Endothelial cell of umbilical vein (primary cell): ENCODE measurements at regions of chr15 and their contacts with region 1.

Region 1: DNA sequence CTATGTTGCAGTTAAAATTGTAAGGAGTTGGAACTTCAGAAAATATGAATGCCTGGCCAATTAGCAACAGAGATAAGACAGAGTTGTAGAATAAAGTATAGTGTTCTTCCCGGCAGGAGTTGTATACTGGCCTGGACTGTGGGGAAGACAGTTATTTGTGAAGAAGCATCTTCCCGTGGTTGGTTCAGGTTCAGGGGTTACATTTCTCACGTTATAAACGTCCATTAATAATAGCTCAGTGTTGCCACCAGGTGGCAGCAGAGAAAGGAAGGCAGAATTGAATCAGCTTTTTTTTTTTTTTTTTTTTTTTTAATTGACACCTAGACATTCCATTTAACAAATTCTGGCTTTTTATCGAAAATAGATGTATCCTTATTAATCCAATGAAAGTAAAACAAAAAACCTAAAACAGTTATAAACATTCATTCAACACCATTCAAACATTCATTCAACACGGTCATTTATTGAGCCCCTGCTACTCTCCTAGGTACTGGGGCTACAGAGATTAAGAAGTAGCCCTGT is 66.4 kb upstream of the NR2E3 start:
- DNase-seq: peak; percentile 53
- H3K4me3 ChIP-seq: no peak overlapping the region
- H3K27ac ChIP-seq: no peak overlapping the region
- H3K4me1 ChIP-seq: peaks cover 19% of the 10 kb centered on the region
- H3K27me3 ChIP-seq: no peaks in the 10 kb centered on the region
- CTCF ChIP-seq: peak; percentile 55 to 59
- POLR2A ChIP-seq: no peak

Region 2: DNA sequence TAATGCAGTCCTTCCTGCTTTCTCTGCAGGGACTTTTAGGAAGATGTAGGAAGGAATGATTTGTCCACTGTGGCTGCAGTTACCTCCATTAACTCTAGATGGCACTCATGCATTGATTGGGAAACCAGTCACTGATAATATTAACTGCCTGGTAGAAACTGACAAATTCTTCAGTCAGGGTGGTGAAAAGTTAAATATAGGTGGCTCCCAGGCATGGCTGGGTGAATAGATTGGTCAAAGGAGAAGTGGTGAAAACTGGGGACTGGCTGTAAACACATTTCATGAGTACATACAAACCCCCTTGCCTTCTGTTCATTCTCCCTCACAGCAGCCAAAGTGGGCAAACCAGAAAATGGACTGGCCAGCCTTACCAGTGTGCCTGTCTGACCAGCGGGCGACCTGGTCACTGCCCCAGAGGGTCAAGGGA is 295.2 kb before region 1 on chr15:
- CTCF ChIA-PET with region 1: interaction called, 25 read pairs
- POLR2A ChIA-PET with region 1: no interaction called
- dilution Hi-C with region 1: no loop called
- intact Hi-C with region 1: no loop called
- DNase-seq: peak; percentile 87
- H3K4me3 ChIP-seq: no peak overlapping the region
- H3K27ac ChIP-seq: no peak overlapping the region
- H3K4me1 ChIP-seq: peaks cover 21% of the 10 kb centered on the region
- H3K27me3 ChIP-seq: no peaks in the 10 kb centered on the region
- CTCF ChIP-seq: peak; percentile 73 to 87
- POLR2A ChIP-seq: no peak

Region 3: DNA sequence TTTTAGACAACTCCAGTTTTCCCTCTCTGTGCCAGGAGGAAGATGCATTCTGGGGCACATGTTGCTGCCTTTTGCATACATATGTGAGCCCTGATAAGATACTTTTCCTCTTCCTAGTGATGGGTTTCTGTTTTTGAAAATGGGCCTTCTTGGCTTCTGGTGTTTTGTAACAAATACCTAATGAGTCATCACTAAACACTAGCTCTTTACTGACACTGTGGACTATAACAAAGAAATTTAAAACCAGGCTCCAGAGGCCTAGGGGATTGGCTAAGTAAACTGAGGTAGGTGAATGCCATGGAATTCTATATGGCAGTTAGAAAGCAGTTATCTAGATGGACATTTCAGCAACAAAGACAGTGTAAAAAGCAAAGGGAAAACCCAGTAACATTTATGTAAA is 26.9 kb before region 1 on chr15:
- CTCF ChIA-PET with region 1: interaction called, 14 read pairs
- POLR2A ChIA-PET with region 1: no interaction called
- dilution Hi-C with region 1: no loop called
- intact Hi-C with region 1: no loop called
- DNase-seq: peak; percentile 14
- H3K4me3 ChIP-seq: no peak overlapping the region
- H3K27ac ChIP-seq: no peak overlapping the region
- H3K4me1 ChIP-seq: no peaks in the 10 kb centered on the region
- H3K27me3 ChIP-seq: peaks cover 0 to 2% of the 10 kb centered on the region in 2 experiments
- CTCF ChIP-seq: no peak
- POLR2A ChIP-seq: no peak

Region 4: DNA sequence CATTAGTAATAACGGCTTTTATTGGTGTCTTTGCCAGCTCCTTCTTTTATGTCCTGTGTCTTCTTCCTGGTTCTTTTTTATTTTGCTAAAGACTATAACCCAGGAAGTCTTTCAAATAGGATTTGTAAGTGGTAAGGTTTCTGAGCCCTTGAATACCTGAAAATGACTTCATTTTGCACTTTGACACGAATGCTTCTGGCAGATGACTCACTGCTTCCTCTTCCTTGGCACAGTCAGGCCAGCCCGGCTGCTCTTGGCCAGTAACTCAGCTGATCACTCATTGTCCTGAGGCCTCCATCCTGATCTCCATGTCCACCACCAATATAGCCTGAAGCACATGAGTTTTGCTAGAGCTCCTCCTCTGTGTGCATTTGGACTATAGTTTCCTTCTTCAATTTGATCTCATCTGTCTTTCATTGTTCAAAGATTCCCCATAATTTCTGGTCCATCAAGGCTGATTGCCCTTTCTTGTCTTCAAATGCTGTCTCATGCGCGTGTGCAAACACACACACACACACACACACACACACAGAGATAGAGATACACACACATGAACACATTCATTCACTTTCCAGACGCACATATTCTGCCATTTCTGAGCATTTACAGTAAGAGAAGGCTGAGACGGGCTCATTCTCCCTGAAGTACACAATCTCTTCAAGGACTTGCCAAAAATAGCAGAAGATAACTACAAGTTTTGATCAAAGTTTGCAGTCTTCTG is 17.9 kb after region 1 on chr15:
- CTCF ChIA-PET with region 1: interaction called, 10 read pairs
- POLR2A ChIA-PET with region 1: no interaction called
- dilution Hi-C with region 1: no loop called
- intact Hi-C with region 1: no loop called
- DNase-seq: peak; percentile 84
- H3K4me3 ChIP-seq: no peak overlapping the region
- H3K27ac ChIP-seq: peak overlapping the region; percentile 69
- H3K4me1 ChIP-seq: peaks cover 9% of the 10 kb centered on the region
- H3K27me3 ChIP-seq: no peaks in the 10 kb centered on the region
- CTCF ChIP-seq: no peak
- POLR2A ChIP-seq: no peak

Region 5: GRCh38 chr15:71792521-71792920 is 48.6 kb after region 1 on chr15:
- CTCF ChIA-PET with region 1: interaction called, 26 read pairs
- POLR2A ChIA-PET with region 1: no interaction called
- dilution Hi-C with region 1: no loop called
- intact Hi-C with region 1: no loop called
- DNase-seq: peak; percentile 64
- H3K4me3 ChIP-seq: no peak overlapping the region
- H3K27ac ChIP-seq: peak overlapping the region; percentile 74
- H3K4me1 ChIP-seq: peaks cover 45% of the 10 kb centered on the region
- H3K27me3 ChIP-seq: no peaks in the 10 kb centered on the region
- CTCF ChIP-seq: no peak
- POLR2A ChIP-seq: no peak